Adrenal gland (tissue), 19 donors: ENCODE measurements at regions of chr11 and their contacts with region 1.

Region 1: GRCh38 chr11:87275176-87275575 is 237.4 kb downstream of the TMEM135 start:
- DNase-seq: no peak
- H3K4me3 ChIP-seq: no peak overlapping the region
- H3K27ac ChIP-seq: no peak overlapping the region
- H3K4me1 ChIP-seq: no peaks in the 10 kb centered on the region
- H3K27me3 ChIP-seq: no peaks in the 10 kb centered on the region
- CTCF ChIP-seq: no peak
- POLR2A ChIP-seq: no peak

Region 2: DNA sequence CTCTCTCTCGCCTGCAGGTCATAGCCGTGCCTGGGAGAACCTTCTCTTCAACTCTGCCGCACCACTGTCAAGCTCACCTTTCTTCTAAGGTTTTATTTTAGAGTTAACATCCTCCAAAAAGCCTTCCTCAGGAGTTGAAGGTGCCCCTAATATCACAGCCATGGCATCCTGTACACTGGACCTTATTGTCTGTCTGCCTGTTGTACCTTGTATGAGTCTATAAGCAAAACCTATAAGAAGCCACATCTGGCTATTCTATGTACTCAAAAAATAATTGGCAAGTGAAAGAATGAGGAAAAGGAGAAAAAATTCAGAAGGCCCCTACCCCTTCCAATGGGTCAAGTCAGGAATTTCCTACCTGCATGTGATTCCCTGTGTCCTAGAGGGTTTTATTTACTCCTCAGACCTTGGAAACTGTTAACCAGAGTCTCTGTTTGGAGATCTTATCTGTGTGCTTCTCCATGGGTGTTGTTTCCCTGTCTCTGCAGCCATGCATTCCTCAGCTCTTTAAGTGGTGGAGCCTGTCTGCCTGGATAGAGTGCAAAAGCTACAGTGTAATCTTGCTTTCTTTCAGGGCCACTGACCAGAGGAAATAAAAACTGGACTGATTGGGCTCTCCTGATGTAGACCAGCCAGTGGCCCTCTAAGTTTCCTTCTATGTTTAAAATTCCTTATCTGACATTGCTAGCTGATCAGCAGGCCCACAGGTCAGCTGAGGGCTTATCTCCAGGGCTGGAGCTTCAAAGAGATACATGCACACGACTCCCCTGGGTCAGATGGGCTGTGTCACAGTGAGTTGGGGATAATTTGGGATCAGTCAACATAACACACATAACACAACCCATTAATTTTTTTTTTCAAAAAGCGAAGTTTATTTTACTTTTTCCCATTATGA is 275.1 kb before region 1 on chr11:
- intact Hi-C with region 1: loop called in 1 of 2 experiments (anchors 5 kb)
- DNase-seq: peak in 5 of 7 donors; percentile 23 to 58 (median 44)
- H3K4me3 ChIP-seq: no peak overlapping the region
- H3K27ac ChIP-seq: no peak overlapping the region
- H3K4me1 ChIP-seq: no peaks in the 10 kb centered on the region
- H3K27me3 ChIP-seq: no peaks in the 10 kb centered on the region
- CTCF ChIP-seq: no peak
- POLR2A ChIP-seq: no peak